CD4-positive, alpha-beta T cell (primary cell): ENCODE measurements at regions of chr22 and their contacts with region 1.

Region 1: GRCh38 chr22:40922484-40923303 is 28.5 kb upstream of the RBX1 start:
- DNase-seq: peak in 6 of 14 experiments; percentile 1 to 84 (median 46)
- ATAC-seq: peak; percentile 98
- H3K4me3 ChIP-seq: no peak overlapping the region
- H3K4me3 Mint-ChIP-seq: peak overlapping the region; percentile 0
- H3K27ac ChIP-seq: no peak overlapping the region
- H3K27ac Mint-ChIP-seq: no peak overlapping the region
- H3K4me1 ChIP-seq: peaks cover 3% of the 10 kb centered on the region
- H3K4me1 Mint-ChIP-seq: peaks cover 5% of the 10 kb centered on the region
- H3K27me3 ChIP-seq: no peaks in the 10 kb centered on the region
- H3K27me3 Mint-ChIP-seq: no peaks in the 10 kb centered on the region
- CTCF ChIP-seq: peak; percentile 78

Region 2: DNA sequence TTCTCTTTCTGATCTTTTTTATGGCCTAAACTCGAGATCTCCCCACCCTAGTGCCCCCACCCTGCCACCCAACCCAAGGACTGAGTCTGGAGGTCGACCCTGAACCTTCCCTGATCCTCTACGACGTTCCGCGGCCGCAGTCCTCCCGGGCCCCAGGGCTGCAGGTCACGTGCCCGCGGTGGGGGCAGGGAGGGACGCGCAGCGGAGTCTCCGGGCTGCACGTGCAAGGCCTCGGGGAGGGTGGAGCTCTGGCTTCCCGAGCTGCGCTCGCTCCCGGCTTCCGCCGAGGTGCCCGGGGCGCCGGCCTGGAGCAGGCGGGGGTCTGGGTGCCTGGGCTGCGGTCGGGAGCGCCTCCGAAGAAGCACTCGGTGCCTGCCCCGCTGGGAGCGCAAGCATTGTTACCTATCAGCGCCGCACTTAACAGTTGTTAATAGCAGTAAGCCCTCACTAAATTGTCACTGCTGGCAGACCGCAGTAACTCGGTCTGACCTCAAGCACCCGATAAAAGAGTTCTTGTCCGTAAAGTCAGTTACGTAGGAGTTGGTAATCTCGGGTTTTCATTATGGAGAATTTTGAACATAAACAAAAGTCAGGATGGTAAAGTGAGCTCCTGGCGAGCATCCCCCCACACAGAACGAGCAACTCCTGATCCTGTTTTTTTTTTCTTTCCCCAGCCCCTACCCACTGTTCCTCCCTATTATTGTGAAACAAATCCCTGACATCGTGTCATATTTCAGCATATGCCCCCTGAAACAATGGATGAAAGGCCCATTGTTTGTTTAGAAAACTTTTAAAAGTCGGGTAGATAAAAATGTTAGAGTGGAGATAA is 100.0 kb after region 1 on chr22:
- CTCF ChIA-PET with region 1: interaction called, 10 read pairs
- POLR2A ChIA-PET with region 1: interaction called, 10 read pairs
- intact Hi-C with region 1: no loop called
- DNase-seq: peak; percentile 62 to 89 (median 76)
- ATAC-seq: peak; percentile 79
- H3K4me3 ChIP-seq: peak overlapping the region; percentile 63
- H3K4me3 Mint-ChIP-seq: peak overlapping the region; percentile 86
- H3K27ac ChIP-seq: peak overlapping the region; percentile 64 to 80
- H3K27ac Mint-ChIP-seq: peak overlapping the region; percentile 63
- H3K4me1 ChIP-seq: peaks cover 21% of the 10 kb centered on the region
- H3K4me1 Mint-ChIP-seq: peaks cover 20% of the 10 kb centered on the region
- H3K27me3 ChIP-seq: no peaks in the 10 kb centered on the region
- H3K27me3 Mint-ChIP-seq: no peaks in the 10 kb centered on the region
- CTCF ChIP-seq: no peak

Region 3: DNA sequence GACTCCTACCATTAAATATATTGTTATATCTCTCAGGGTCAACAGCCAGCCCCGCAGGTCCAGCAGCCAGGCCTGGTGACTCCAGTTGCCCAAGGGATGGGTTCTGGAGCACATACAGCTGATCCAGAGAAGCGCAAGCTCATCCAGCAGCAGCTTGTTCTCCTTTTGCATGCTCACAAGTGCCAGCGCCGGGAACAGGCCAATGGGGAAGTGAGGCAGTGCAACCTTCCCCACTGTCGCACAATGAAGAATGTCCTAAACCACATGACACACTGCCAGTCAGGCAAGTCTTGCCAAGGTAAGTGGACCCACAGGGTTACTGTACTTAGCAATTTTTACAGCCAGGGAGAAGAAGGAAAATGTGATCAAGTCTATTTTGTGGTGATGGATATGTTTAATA is 204.8 kb after region 1 on chr22:
- CTCF ChIA-PET with region 1: interaction called, 3 read pairs
- POLR2A ChIA-PET with region 1: no interaction called
- intact Hi-C with region 1: loop called in 1 of 2 experiments (anchors 5 kb)
- DNase-seq: no peak
- ATAC-seq: no peak
- H3K4me3 ChIP-seq: no peak overlapping the region
- H3K4me3 Mint-ChIP-seq: no peak overlapping the region
- H3K27ac ChIP-seq: no peak overlapping the region
- H3K27ac Mint-ChIP-seq: no peak overlapping the region
- H3K4me1 ChIP-seq: peaks cover 3% of the 10 kb centered on the region
- H3K4me1 Mint-ChIP-seq: peaks cover 15% of the 10 kb centered on the region
- H3K27me3 ChIP-seq: no peaks in the 10 kb centered on the region
- H3K27me3 Mint-ChIP-seq: no peaks in the 10 kb centered on the region
- CTCF ChIP-seq: no peak

Region 4: DNA sequence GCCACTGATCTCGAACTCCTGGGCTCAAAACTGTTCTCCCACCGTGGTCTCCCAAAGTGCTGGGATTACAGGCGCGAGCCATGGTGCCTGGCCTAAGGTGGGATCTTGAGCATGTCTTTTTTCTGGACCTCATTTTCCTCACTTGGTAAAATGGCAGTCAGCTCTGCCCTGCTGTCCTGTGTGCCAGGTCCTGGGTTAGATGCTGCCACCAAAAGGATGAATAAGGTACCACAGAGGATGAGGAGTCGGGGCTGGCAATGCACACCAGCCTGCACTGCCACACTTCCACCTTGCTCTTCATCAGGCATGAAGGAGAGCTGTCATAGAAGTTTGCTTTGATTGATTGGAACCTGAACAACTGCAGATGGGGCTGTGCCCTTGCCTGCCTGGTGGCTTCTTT is 578.5 kb after region 1 on chr22:
- CTCF ChIA-PET with region 1: no interaction called
- POLR2A ChIA-PET with region 1: no interaction called
- intact Hi-C with region 1: loop called in 1 of 2 experiments (anchors 10 kb)
- DNase-seq: peak in 5 of 14 experiments; percentile 10 to 45 (median 32)
- ATAC-seq: peak; percentile 57
- H3K4me3 ChIP-seq: no peak overlapping the region
- H3K4me3 Mint-ChIP-seq: no peak overlapping the region
- H3K27ac ChIP-seq: no peak overlapping the region
- H3K27ac Mint-ChIP-seq: no peak overlapping the region
- H3K4me1 ChIP-seq: no peaks in the 10 kb centered on the region
- H3K4me1 Mint-ChIP-seq: no peaks in the 10 kb centered on the region
- H3K27me3 ChIP-seq: no peaks in the 10 kb centered on the region
- H3K27me3 Mint-ChIP-seq: no peaks in the 10 kb centered on the region
- CTCF ChIP-seq: no peak